Ovary (tissue), 10 donors: ENCODE measurements at regions of chr5 and their contacts with region 1.

Region 1: GRCh38 chr5:106269252-106269843 is 1401.4 kb downstream of the EFNA5 start:
- DNase-seq: no peak
- H3K4me3 ChIP-seq: no peak overlapping the region
- H3K27ac ChIP-seq: no peak overlapping the region
- H3K4me1 ChIP-seq: no peaks in the 10 kb centered on the region
- H3K27me3 ChIP-seq: no peaks in the 10 kb centered on the region
- CTCF ChIP-seq: no peak
- EP300 ChIP-seq: no peak
- POLR2A ChIP-seq: no peak

Region 2: GRCh38 chr5:105530581-105531169 is 738.7 kb before region 1 on chr5:
- intact Hi-C with region 1: loop called in 1 of 4 experiments (anchors 5 kb)
- DNase-seq: no peak
- H3K4me3 ChIP-seq: no peak overlapping the region
- H3K27ac ChIP-seq: no peak overlapping the region
- H3K4me1 ChIP-seq: no peaks in the 10 kb centered on the region
- H3K27me3 ChIP-seq: no peaks in the 10 kb centered on the region
- CTCF ChIP-seq: no peak
- EP300 ChIP-seq: no peak
- POLR2A ChIP-seq: no peak

Region 3: DNA sequence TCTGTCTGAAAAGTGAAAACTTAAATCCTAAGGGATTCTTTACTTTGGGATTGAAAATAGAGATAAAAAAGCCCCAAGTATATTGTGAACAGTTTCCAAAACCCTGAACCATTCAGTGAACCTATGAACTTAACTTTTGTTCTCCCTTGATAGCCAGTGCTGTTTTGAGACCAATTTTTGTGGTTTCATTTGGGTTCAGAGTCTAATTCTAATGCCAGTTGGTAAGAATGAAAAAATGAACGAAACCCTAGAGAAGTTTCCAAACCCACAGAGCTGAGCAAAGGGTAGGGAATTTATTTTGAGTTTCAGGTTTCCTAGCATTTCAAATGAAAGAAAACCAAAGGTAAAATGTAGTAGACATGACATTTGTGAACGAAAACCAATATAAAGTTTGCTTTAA is 34.6 kb after region 1 on chr5:
- intact Hi-C with region 1: no loop called
- DNase-seq: no peak
- H3K4me3 ChIP-seq: no peak overlapping the region
- H3K27ac ChIP-seq: no peak overlapping the region
- H3K4me1 ChIP-seq: no peaks in the 10 kb centered on the region
- H3K27me3 ChIP-seq: no peaks in the 10 kb centered on the region
- CTCF ChIP-seq: no peak
- EP300 ChIP-seq: no peak
- POLR2A ChIP-seq: no peak

Region 4: DNA sequence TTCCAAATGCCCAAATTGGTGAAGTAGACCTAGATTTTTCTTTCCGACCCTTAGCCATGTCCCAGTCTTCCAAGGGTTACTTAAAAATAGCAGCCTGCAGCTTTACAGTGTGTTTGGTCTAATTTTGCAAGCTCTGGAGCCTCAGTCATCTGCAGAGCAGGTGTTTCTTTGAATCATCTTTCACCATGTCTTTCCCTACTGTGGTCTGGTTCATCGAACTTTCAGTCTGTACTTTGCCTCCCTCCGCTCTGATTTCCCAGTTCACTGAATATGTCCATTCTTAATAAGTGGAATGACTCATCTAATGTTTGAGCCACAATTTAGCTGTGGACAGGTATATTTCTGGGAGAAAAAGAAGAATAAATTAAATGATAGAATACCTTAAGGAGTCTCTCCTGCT is 340.7 kb after region 1 on chr5:
- intact Hi-C with region 1: no loop called
- DNase-seq: no peak
- H3K4me3 ChIP-seq: no peak overlapping the region
- H3K27ac ChIP-seq: no peak overlapping the region
- H3K4me1 ChIP-seq: no peaks in the 10 kb centered on the region
- H3K27me3 ChIP-seq: no peaks in the 10 kb centered on the region
- CTCF ChIP-seq: no peak
- EP300 ChIP-seq: no peak
- POLR2A ChIP-seq: no peak